ENCODE measurements at regions of chr12 and their contacts with region 1.

Region 1: DNA sequence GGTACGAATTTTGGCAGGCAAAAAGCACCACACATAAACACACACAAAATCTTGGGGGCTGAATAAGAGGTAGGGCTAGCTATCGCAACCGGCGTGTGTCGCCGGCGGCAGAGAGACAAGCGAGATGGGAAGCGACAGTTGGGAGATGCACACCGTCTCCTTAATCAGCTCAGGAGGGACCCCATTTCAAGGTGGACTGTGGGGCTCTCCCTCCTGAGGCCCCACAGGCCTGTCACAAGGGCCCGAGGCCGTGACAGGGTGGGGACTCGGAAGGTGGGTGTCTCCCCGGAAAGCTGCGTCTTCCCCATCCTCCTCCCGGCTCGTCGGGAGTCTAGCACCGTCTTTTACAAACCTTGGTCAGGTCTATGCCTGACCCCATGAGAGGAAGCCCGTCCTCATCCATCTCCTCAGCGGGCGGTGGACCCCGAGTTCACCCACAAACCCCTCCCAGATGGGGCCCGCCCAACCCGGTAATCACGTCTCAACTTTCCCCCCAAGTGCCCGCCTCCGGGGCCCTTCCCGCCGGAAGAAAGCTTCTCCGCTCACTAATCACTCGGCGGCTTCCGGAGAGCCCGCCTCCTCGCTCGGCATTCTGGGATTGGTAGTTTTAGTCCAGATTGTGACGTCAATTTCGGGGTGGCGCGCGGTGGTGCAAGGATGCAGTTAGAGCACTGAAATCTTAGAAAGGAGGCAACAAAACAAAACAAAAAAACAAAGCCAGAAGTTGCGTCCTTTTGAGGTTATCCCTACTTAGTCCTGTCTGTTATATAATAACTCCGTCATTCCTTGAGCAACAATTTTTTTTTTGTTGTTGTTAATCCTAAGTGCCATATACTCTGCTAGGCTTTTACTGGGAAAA is at the start of gene WASHC3:
- DNase-seq: peak; percentile 90
- ATAC-seq: peak; percentile 96
- H3K4me3 ChIP-seq: peak within 1 kb of the TSS; percentile 76 to 92 (median 85)
- H3K27ac ChIP-seq: peak within 1 kb of the TSS; percentile 63
- H3K4me1 ChIP-seq: peaks cover 42% of the 10 kb centered on the region
- H3K27me3 ChIP-seq: no peaks in the 10 kb centered on the region; a peak in 1 of 5 replicates
- CTCF ChIP-seq: peak; percentile 15
- EP300 ChIP-seq: no peak
- POLR2A ChIP-seq: peak; percentile 60 to 81
- RAD21 ChIP-seq: no peak
- total RNA-seq, gene WASHC3: 32.7 and 40.5 TPM in 2 replicates

Region 2: DNA sequence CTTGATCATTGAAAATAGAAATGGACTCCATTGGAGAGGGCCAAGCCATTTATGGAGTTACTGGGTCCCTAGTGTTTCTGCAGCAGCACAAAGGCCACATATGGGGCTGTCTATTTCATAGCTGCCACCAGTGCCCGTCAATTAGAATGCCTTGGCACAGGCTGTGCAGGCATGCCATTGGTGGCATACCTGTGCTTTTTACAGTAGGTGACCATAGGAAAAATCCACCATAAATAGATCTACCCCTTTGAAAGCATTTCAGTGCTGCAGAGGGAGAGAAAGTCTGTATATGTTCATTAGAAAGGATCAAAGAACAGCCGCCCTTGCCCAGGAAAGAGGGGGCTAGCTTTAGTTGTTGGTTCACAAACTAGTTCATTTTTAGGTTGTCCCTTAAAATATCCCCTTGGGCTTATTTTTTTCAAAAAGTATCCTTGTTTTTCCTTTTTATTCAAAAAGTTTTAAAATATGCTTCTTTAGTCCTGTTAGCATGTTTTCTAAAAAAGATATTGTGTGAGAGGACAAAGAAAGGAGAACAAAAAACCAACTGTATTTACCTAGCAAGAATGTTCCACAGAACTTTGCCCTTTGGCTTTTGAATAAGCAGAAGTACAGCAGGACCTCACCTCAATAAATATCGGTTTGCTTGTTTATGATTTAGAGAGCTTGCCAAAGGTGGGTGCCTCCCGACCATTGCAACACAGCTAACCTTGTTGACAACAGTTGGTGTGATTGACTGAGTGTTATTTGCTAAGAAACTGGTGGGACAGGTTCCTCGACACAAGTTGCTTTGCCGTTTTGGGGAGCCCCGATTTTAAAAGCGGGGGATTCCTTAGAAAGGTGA is 453.7 kb before region 1 on chr12:
- CTCF ChIA-PET with region 1: no interaction called
- POLR2A ChIA-PET with region 1: no interaction called
- in situ Hi-C with region 1: no loop called
- intact Hi-C with region 1: loop called (anchors 5 kb)
- DNase-seq: peak; percentile 100
- ATAC-seq: peak; percentile 93
- H3K4me3 ChIP-seq: peak overlapping the region in 2 of 3 experiments; percentile 29 to 51; a peak in 3 of 6 replicates
- H3K27ac ChIP-seq: peak overlapping the region; percentile 98
- H3K4me1 ChIP-seq: peaks cover 78% of the 10 kb centered on the region
- H3K27me3 ChIP-seq: no peaks in the 10 kb centered on the region
- CTCF ChIP-seq: no peak
- EP300 ChIP-seq: peak; percentile 94 to 100; a peak in 3 of 4 replicates
- POLR2A ChIP-seq: peak in 1 of 2 experiments; percentile 23; a peak in 2 of 4 replicates
- RAD21 ChIP-seq: peak; percentile 31; the same call in 1 of the 2 replicates

Region 3: GRCh38 chr12:101902641-101903040 is 159.1 kb before region 1 on chr12:
- CTCF ChIA-PET with region 1: no interaction called
- POLR2A ChIA-PET with region 1: no interaction called
- in situ Hi-C with region 1: no loop called
- intact Hi-C with region 1: no loop called
- DNase-seq: no peak
- ATAC-seq: no peak
- H3K4me3 ChIP-seq: no peak overlapping the region
- H3K27ac ChIP-seq: no peak overlapping the region
- H3K4me1 ChIP-seq: peaks cover under 1% of the 10 kb centered on the region; the same call in 1 of the 2 replicates
- H3K27me3 ChIP-seq: no peaks in the 10 kb centered on the region
- CTCF ChIP-seq: no peak
- EP300 ChIP-seq: no peak
- POLR2A ChIP-seq: no peak
- RAD21 ChIP-seq: no peak

Region 4: GRCh38 chr12:101945369-101946231 is 116.2 kb before region 1 on chr12:
- CTCF ChIA-PET with region 1: no interaction called
- POLR2A ChIA-PET with region 1: interaction called, 3 read pairs
- in situ Hi-C with region 1: no loop called
- intact Hi-C with region 1: loop called (anchors 5 kb)
- DNase-seq: peak; percentile 39
- ATAC-seq: peak; percentile 81
- H3K4me3 ChIP-seq: no peak overlapping the region
- H3K27ac ChIP-seq: no peak overlapping the region
- H3K4me1 ChIP-seq: peaks cover 15% of the 10 kb centered on the region
- H3K27me3 ChIP-seq: 0 out of 5 replicates have a peak, but pooled peaks cover 0 to 3% of the 10 kb centered on the region in 2 experiments
- CTCF ChIP-seq: no peak
- EP300 ChIP-seq: no peak
- POLR2A ChIP-seq: no peak
- RAD21 ChIP-seq: no peak

Region 5: GRCh38 chr12:102009796-102010195 is 52.0 kb before region 1 on chr12:
- CTCF ChIA-PET with region 1: no interaction called
- POLR2A ChIA-PET with region 1: no interaction called
- in situ Hi-C with region 1: no loop called
- intact Hi-C with region 1: no loop called
- DNase-seq: no peak
- ATAC-seq: no peak
- H3K4me3 ChIP-seq: no peak overlapping the region
- H3K27ac ChIP-seq: no peak overlapping the region
- H3K4me1 ChIP-seq: no peaks in the 10 kb centered on the region
- H3K27me3 ChIP-seq: no peaks in the 10 kb centered on the region
- CTCF ChIP-seq: no peak
- EP300 ChIP-seq: no peak
- POLR2A ChIP-seq: no peak
- RAD21 ChIP-seq: no peak

Region 6: DNA sequence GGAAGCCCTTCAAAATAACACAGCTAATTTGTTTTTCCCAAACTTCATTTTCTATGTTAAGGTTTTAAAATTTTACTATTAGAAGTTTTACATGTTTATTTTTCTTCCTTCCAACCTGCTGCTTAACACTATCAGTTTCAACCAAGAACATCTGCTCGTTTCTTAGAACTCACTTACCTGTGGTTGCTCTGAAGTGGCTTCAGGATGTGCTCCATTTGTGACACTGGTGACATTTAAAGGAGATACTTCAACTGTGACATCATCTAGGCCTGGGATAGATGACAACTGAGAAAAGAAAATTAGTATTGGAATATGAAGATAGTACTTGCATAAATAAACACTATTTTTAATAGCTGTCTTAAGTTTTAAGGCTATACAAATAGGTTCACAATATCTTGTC is 17.9 kb before region 1 on chr12:
- CTCF ChIA-PET with region 1: no interaction called
- POLR2A ChIA-PET with region 1: no interaction called
- in situ Hi-C with region 1: no loop called
- intact Hi-C with region 1: no loop called
- DNase-seq: no peak
- ATAC-seq: no peak
- H3K4me3 ChIP-seq: no peak overlapping the region
- H3K27ac ChIP-seq: no peak overlapping the region
- H3K4me1 ChIP-seq: no peaks in the 10 kb centered on the region
- H3K27me3 ChIP-seq: no peaks in the 10 kb centered on the region
- CTCF ChIP-seq: no peak
- EP300 ChIP-seq: no peak
- POLR2A ChIP-seq: no peak
- RAD21 ChIP-seq: no peak

Region 7: GRCh38 chr12:102119674-102120563 is 58.1 kb after region 1 on chr12 and contains the starts of genes NUP37 and PARPBP:
- CTCF ChIA-PET with region 1: no interaction called
- POLR2A ChIA-PET with region 1: interaction called, 14 read pairs
- in situ Hi-C with region 1: no loop called
- intact Hi-C with region 1: loop called (anchors 1 kb)
- DNase-seq: peak; percentile 84
- ATAC-seq: peak; percentile 98
- H3K4me3 ChIP-seq: peak within 1 kb of the TSS; percentile 83 to 97 (median 86)
- H3K27ac ChIP-seq: peak within 1 kb of the TSS; percentile 73
- H3K4me1 ChIP-seq: peaks cover 33% of the 10 kb centered on the region
- H3K27me3 ChIP-seq: no peaks in the 10 kb centered on the region; a peak in 1 of 5 replicates
- CTCF ChIP-seq: peak; percentile 41
- EP300 ChIP-seq: no peak
- POLR2A ChIP-seq: peak; percentile 73 to 92; a peak in 3 of 4 replicates
- RAD21 ChIP-seq: no peak; the same call in 1 of the 2 replicates
- total RNA-seq, gene NUP37: 80.1 and 130 TPM in 2 replicates
- total RNA-seq, gene PARPBP: 28.4 and 43.3 TPM in 2 replicates